ENCODE measurements at regions of chr2 and their contacts with region 1.

Region 1: GRCh38 chr2:119958670-119959268 is 54.1 kb upstream of the EPB41L5 start:
- DNase-seq: no peak
- ATAC-seq: no peak
- H3K4me3 ChIP-seq: no peak overlapping the region
- H3K27ac ChIP-seq: no peak overlapping the region
- H3K4me1 ChIP-seq: no peaks in the 10 kb centered on the region
- H3K27me3 ChIP-seq: no peaks in the 10 kb centered on the region

Region 2: DNA sequence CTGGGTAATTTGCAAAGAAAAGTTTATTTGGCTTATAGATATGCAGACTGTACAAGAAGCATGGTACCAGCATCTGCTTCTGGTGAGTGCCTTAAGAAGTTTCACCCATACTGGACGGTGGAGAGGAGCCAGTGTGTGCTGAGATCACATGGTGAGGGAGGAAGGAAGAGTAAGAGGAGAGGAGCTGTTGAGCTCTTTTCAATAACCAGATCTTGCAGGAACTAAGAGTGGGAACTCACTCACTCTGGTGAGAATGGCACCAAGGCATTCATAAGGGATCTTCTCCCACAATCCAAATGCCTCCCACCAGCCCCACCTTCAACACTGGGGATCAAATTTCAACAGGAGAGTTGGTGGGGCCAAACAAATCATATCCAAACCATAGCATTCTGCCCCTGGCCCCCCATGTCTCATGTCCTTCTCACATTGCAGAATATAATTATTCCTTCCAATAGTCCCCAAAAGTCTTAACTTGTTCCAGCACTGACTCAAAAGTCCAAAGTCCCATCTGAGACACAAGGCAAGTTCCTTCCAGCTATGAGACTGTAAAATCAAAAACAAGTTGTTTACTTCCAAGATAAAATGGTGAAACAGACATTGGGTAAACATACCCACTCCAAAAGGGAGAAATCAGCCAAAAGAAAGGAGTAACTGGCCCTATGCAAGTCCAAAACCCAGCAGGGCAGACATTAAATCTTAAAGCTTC is 538.8 kb before region 1 on chr2:
- intact Hi-C with region 1: no loop called
- DNase-seq: no peak
- ATAC-seq: no peak
- H3K4me3 ChIP-seq: no peak overlapping the region
- H3K27ac ChIP-seq: no peak overlapping the region
- H3K4me1 ChIP-seq: peaks cover 4% of the 10 kb centered on the region
- H3K27me3 ChIP-seq: no peaks in the 10 kb centered on the region

Region 3: DNA sequence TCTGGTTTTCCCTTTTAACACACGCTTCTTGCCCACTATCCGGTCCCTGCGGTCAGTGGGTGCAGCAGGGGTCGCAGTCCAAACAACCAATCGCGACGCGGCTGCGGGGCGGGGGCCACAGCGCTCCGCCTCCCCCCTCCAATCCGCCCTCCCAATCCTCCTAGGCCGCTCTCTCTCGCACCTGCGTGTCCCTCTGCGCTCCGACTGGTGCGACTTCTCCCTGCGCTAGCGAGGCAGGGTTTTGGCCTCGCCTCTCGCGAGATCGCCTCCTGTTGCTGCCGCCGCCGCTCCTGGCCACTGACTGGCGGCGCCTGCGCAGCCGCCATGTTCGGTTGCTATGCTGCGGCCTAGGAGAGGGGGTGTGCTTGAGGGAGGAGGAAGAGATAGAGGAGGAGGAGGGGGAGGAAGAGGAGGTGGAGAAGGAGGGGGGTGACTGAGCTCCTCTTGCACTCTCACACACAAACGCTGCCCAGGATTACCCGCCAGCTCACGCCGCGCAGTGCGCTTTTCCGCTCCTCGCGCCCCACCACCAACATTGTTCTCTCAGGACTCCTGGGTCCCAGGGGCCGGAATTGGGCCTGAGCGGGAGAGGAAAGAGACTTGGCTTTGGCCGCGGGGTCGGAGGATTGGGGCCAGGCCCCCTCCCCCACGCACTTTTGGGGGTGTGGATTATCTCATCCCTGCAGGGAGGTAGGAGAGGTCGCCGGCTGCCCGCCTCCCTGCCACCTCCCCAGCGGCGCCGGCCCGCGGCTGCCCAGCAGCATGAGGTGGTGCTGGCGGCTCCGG is 199.1 kb before region 1 on chr2 and contains the start of gene PTPN4:
- intact Hi-C with region 1: loop called in 1 of 4 experiments (anchors 10 kb)
- DNase-seq: peak; percentile 97 to 99 (median 99)
- ATAC-seq: peak; percentile 99
- H3K4me3 ChIP-seq: peak within 1 kb of the TSS; percentile 97
- H3K27ac ChIP-seq: peak within 1 kb of the TSS; percentile 98
- H3K4me1 ChIP-seq: no peaks in the 10 kb centered on the region
- H3K27me3 ChIP-seq: no peaks in the 10 kb centered on the region
- total RNA-seq, gene PTPN4: 28.4 to 42.6 (median 38.7) TPM

Region 4: GRCh38 chr2:120142528-120143219 is 183.9 kb after region 1 on chr2:
- intact Hi-C with region 1: no loop called
- DNase-seq: no peak
- ATAC-seq: no peak
- H3K4me3 ChIP-seq: no peak overlapping the region
- H3K27ac ChIP-seq: no peak overlapping the region
- H3K4me1 ChIP-seq: no peaks in the 10 kb centered on the region
- H3K27me3 ChIP-seq: no peaks in the 10 kb centered on the region

Measured in right cardiac atrium (tissue), 5 donors.